Activated B cell treated with CpG ODN at 0.5 μM for 24 hours (primary cell): ENCODE measurements at regions of chr14 and their contacts with region 1.

Region 1: GRCh38 chr14:39102969-39103957 is at the start of gene SEC23A:
- DNase-seq: peak; percentile 79
- ATAC-seq: peak; percentile 98
- H3K4me3 Mint-ChIP-seq: peak within 1 kb of the TSS; percentile 96
- H3K27ac Mint-ChIP-seq: peak within 1 kb of the TSS; percentile 97
- H3K4me1 Mint-ChIP-seq: peaks cover 35% of the 10 kb centered on the region
- H3K27me3 Mint-ChIP-seq: no peaks in the 10 kb centered on the region
- CTCF ChIP-seq: no peak
- total RNA-seq, gene SEC23A: 38.3 and 39.4 TPM in 2 replicates

Region 2: DNA sequence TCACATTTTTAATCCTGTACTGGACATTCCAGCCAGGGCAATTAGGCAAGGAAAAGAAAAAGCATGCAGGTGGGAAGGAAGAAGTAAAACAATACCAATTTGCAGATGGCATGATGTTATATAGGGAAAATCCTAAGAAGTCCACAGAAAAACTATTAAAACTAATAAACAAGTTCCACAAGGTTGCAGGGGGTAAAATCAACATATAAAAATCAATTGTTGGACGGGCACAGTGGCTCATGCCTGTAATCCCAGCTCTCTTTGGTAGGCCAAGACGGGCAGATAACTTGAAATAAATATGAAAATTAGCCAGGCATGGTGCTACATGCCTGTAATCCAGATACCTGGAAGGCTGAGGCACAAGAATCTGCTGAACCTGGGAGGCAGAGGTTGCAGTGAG is 32.2 kb before region 1 on chr14:
- CTCF ChIA-PET with region 1: no interaction called
- POLR2A ChIA-PET with region 1: no interaction called
- intact Hi-C with region 1: no loop called
- DNase-seq: no peak
- ATAC-seq: no peak
- H3K4me3 Mint-ChIP-seq: no peak overlapping the region
- H3K27ac Mint-ChIP-seq: no peak overlapping the region
- H3K4me1 Mint-ChIP-seq: no peaks in the 10 kb centered on the region
- H3K27me3 Mint-ChIP-seq: no peaks in the 10 kb centered on the region
- CTCF ChIP-seq: no peak

Region 3: GRCh38 chr14:39114073-39114838 is 11.0 kb after region 1 on chr14 and contains the start of gene GEMIN2:
- CTCF ChIA-PET with region 1: interaction called, 11 read pairs
- POLR2A ChIA-PET with region 1: interaction called, 85 read pairs
- intact Hi-C with region 1: loop called (anchors 1 kb)
- DNase-seq: peak; percentile 83
- ATAC-seq: peak; percentile 99
- H3K4me3 Mint-ChIP-seq: peak within 1 kb of the TSS; percentile 98
- H3K27ac Mint-ChIP-seq: peak within 1 kb of the TSS; percentile 95
- H3K4me1 Mint-ChIP-seq: peaks cover 28% of the 10 kb centered on the region
- H3K27me3 Mint-ChIP-seq: no peaks in the 10 kb centered on the region
- CTCF ChIP-seq: no peak
- total RNA-seq, gene GEMIN2: 12.3 and 12.6 TPM in 2 replicates

Region 4: GRCh38 chr14:39174560-39175444 is 71.5 kb after region 1 on chr14 and contains the start of gene PNN:
- CTCF ChIA-PET with region 1: no interaction called
- POLR2A ChIA-PET with region 1: interaction called, 46 read pairs
- intact Hi-C with region 1: loop called (anchors 1 kb)
- DNase-seq: peak; percentile 87
- ATAC-seq: peak; percentile 82
- H3K4me3 Mint-ChIP-seq: peak within 1 kb of the TSS; percentile 99
- H3K27ac Mint-ChIP-seq: peak within 1 kb of the TSS; percentile 99
- H3K4me1 Mint-ChIP-seq: peaks cover 41% of the 10 kb centered on the region
- H3K27me3 Mint-ChIP-seq: no peaks in the 10 kb centered on the region
- CTCF ChIP-seq: no peak
- total RNA-seq, gene PNN: 102 and 109 TPM in 2 replicates

Region 5: DNA sequence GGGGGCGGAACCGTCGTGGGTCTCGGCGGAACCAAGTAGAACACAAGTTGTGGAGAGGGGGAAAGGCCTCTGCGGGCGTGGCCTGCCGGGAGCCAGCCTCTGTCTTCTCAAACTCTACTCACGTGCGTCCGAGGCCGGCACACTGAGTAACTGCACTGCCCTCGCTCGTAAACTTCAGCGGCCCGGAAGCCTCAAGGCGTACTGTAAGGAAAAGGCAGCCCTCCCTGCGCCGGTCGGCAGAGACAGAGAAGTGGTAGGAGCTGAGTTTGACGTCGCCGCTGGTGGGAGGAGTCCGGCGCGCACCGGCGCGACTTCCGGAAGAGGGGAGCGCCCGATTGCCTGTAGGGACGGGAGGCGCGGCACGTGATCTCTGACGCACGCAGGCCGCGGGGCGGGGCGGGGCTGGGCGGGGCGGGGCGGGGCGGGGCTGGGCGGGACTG is 328.9 kb after region 1 on chr14 and contains the start of gene FBXO33:
- CTCF ChIA-PET with region 1: interaction called, 3 read pairs
- POLR2A ChIA-PET with region 1: interaction called, 43 read pairs
- intact Hi-C with region 1: loop called (anchors 1 kb)
- DNase-seq: peak; percentile 96
- ATAC-seq: peak; percentile 77
- H3K4me3 Mint-ChIP-seq: peak within 1 kb of the TSS; percentile 98
- H3K27ac Mint-ChIP-seq: peak within 1 kb of the TSS; percentile 100
- H3K4me1 Mint-ChIP-seq: peaks cover 41% of the 10 kb centered on the region
- H3K27me3 Mint-ChIP-seq: no peaks in the 10 kb centered on the region
- CTCF ChIP-seq: no peak
- total RNA-seq, gene FBXO33: 12.7 and 14.3 TPM in 2 replicates

Region 6: DNA sequence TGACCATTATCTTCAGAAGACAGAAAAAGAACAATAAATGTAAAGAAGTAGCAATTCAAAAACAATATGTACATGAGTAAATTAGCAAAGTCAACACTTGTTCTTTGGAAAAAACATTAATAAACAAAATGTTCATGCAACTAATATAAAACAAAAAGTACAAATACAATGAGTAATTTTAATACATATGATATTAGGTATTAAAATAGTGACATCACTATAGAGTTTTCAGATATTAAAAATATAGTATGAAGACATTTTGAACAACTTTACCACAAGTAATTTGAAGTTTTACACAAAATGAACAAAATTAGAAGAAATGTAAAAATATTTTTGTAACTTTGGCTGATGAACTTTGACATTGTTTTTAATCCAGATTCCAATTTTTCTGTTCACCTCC is 1775.2 kb after region 1 on chr14:
- CTCF ChIA-PET with region 1: no interaction called
- POLR2A ChIA-PET with region 1: no interaction called
- intact Hi-C with region 1: no loop called
- DNase-seq: no peak
- ATAC-seq: no peak
- H3K4me3 Mint-ChIP-seq: no peak overlapping the region
- H3K27ac Mint-ChIP-seq: no peak overlapping the region
- H3K4me1 Mint-ChIP-seq: no peaks in the 10 kb centered on the region
- H3K27me3 Mint-ChIP-seq: no peaks in the 10 kb centered on the region
- CTCF ChIP-seq: no peak